Activated CD4-positive, alpha-beta T cell treated with anti-CD3 and anti-CD28 coated beads, Interleukin-2, amount 10 ng/mL, durations not matched to agents 24 days and 14 days (primary cell): ENCODE measurements at regions of chr2 and their contacts with region 1.

Region 1: DNA sequence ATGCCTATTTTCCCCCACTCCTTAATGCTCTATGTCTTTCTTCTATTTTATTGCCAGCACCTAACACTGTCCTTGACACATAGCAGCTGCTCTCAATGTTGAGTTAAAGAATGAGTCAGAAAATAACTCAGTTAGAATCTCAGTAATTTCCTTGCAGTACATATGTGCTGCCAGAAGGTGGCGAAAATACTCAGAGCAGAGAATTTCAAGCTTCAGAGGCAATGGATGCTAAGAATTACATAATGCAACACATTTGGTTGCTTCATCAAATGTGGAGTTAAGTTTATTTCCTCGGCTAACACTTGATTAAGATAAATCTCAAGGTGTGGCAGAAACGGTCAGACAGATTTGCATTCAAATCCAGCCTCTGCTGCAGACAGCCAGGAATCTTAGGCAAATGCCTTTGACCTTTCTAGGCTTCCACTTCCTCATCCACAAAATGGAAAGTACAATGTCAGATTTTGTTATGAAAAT is 105.6 kb downstream of the VSNL1 start:
- DNase-seq: peak; percentile 85
- H3K4me3 Mint-ChIP-seq: no peak overlapping the region
- H3K27ac Mint-ChIP-seq: no peak overlapping the region
- H3K4me1 Mint-ChIP-seq: peaks cover 4% of the 10 kb centered on the region
- H3K27me3 Mint-ChIP-seq: no peaks in the 10 kb centered on the region

Region 2: GRCh38 chr2:17594533-17595401 is 51.4 kb before region 1 on chr2:
- intact Hi-C with region 1: no loop called
- DNase-seq: no peak
- H3K4me3 Mint-ChIP-seq: no peak overlapping the region
- H3K27ac Mint-ChIP-seq: no peak overlapping the region
- H3K4me1 Mint-ChIP-seq: no peaks in the 10 kb centered on the region
- H3K27me3 Mint-ChIP-seq: peaks cover 12% of the 10 kb centered on the region

Region 3: GRCh38 chr2:17658251-17658843 is 12.2 kb after region 1 on chr2:
- intact Hi-C with region 1: loop called (anchors 1 kb)
- DNase-seq: no peak
- H3K4me3 Mint-ChIP-seq: no peak overlapping the region
- H3K27ac Mint-ChIP-seq: no peak overlapping the region
- H3K4me1 Mint-ChIP-seq: peaks cover 17% of the 10 kb centered on the region
- H3K27me3 Mint-ChIP-seq: no peaks in the 10 kb centered on the region

Region 4: GRCh38 chr2:17672583-17673317 is 26.6 kb after region 1 on chr2:
- intact Hi-C with region 1: loop called (anchors 1 kb)
- DNase-seq: no peak
- H3K4me3 Mint-ChIP-seq: no peak overlapping the region
- H3K27ac Mint-ChIP-seq: no peak overlapping the region
- H3K4me1 Mint-ChIP-seq: peaks cover 3% of the 10 kb centered on the region
- H3K27me3 Mint-ChIP-seq: no peaks in the 10 kb centered on the region

Region 5: DNA sequence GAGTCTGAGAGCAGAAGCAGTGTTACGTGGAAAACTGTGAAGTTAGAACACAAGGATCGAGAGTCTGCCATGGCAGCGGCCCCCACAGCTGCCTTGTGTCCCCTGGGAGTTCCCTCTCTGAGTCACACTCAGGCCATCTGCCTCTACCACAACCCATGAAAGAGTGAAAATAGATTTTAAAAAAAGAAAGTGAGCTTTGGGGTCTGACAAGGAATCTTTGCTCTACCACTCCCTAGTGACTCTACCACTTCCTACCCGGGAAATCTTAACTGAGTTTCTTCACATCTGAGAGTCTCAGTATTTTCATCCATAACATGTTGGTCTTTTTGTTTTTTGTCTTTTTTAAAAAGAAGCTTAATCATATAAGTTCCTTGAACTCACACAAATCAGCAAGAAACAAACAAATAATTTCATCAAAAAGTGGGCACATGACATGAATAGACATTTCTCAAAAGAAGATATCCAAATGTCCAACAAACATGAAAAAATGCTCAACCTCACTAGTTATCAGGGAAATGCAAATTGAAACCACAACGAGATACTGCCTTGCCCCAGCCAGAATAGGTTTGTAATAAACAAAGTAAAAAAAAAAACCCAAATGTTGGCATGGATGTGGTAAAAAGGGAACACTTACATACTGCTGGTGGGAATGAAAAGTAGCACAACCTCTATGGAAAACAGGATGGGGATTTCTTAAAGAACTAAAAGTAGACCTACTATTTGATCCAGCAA is 167.8 kb after region 1 on chr2:
- intact Hi-C with region 1: no loop called
- DNase-seq: no peak
- H3K4me3 Mint-ChIP-seq: no peak overlapping the region
- H3K27ac Mint-ChIP-seq: no peak overlapping the region
- H3K4me1 Mint-ChIP-seq: peaks cover 11% of the 10 kb centered on the region
- H3K27me3 Mint-ChIP-seq: peaks cover 37% of the 10 kb centered on the region